MCF 10A (cell line): ENCODE measurements at regions of chr2 and their contacts with region 1.

Region 1: GRCh38 chr2:44479122-44479887 is 117.6 kb downstream of the CAMKMT start:
- DNase-seq: peak; percentile 86
- H3K4me3 Mint-ChIP-seq: no peak overlapping the region
- H3K27ac Mint-ChIP-seq: no peak overlapping the region
- H3K4me1 Mint-ChIP-seq: no peaks in the 10 kb centered on the region
- H3K27me3 Mint-ChIP-seq: no peaks in the 10 kb centered on the region
- CTCF ChIP-seq: peak; percentile 99

Region 2: GRCh38 chr2:44244129-44244871 is 235.0 kb before region 1 on chr2:
- CTCF ChIA-PET with region 1: interaction called, 3 read pairs
- POLR2A ChIA-PET with region 1: interaction called, 3 read pairs
- intact Hi-C with region 1: loop called (anchors 5 kb)
- DNase-seq: peak; percentile 74
- H3K4me3 Mint-ChIP-seq: peak overlapping the region; percentile 43
- H3K27ac Mint-ChIP-seq: no peak overlapping the region
- H3K4me1 Mint-ChIP-seq: peaks cover 14% of the 10 kb centered on the region
- H3K27me3 Mint-ChIP-seq: no peaks in the 10 kb centered on the region
- CTCF ChIP-seq: peak; percentile 43

Region 3: GRCh38 chr2:44291281-44292248 is 187.7 kb before region 1 on chr2:
- CTCF ChIA-PET with region 1: no interaction called
- POLR2A ChIA-PET with region 1: no interaction called
- intact Hi-C with region 1: no loop called
- DNase-seq: peak; percentile 56
- H3K4me3 Mint-ChIP-seq: no peak overlapping the region
- H3K27ac Mint-ChIP-seq: no peak overlapping the region
- H3K4me1 Mint-ChIP-seq: peaks cover 26% of the 10 kb centered on the region
- H3K27me3 Mint-ChIP-seq: no peaks in the 10 kb centered on the region
- CTCF ChIP-seq: peak; percentile 45

Region 4: GRCh38 chr2:44490726-44491125 is 11.4 kb after region 1 on chr2:
- CTCF ChIA-PET with region 1: interaction called, 14 read pairs
- POLR2A ChIA-PET with region 1: no interaction called
- intact Hi-C with region 1: no loop called
- DNase-seq: peak; percentile 8
- H3K4me3 Mint-ChIP-seq: no peak overlapping the region
- H3K27ac Mint-ChIP-seq: no peak overlapping the region
- H3K4me1 Mint-ChIP-seq: no peaks in the 10 kb centered on the region
- H3K27me3 Mint-ChIP-seq: no peaks in the 10 kb centered on the region
- CTCF ChIP-seq: no peak

Region 5: GRCh38 chr2:44560352-44560751 is 81.0 kb after region 1 on chr2:
- CTCF ChIA-PET with region 1: interaction called, 11 read pairs
- POLR2A ChIA-PET with region 1: interaction called, 3 read pairs
- intact Hi-C with region 1: no loop called
- DNase-seq: peak; percentile 45
- H3K4me3 Mint-ChIP-seq: no peak overlapping the region
- H3K27ac Mint-ChIP-seq: no peak overlapping the region
- H3K4me1 Mint-ChIP-seq: peaks cover 15% of the 10 kb centered on the region
- H3K27me3 Mint-ChIP-seq: no peaks in the 10 kb centered on the region
- CTCF ChIP-seq: peak; percentile 30

Region 6: DNA sequence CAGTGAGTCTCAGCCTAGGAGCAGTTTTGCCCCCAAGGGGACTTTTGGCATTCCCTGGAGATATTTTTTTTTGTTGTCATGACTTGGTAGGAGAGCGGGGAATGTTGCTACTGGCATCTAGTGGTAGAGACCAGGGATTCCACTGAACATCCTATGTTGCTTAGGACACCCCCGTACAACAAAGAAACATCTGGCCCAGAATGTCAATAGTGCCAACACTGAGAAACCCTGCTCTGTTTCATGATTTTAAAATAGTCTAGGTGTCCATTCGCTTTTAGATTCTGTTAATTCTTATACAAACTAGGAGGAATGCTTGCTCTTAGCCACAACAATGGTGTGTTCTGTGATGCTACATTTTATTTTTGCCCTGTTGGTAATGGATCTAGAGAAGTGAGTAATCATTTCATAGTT is 236.4 kb after region 1 on chr2:
- CTCF ChIA-PET with region 1: interaction called, 76 read pairs
- POLR2A ChIA-PET with region 1: no interaction called
- intact Hi-C with region 1: loop called (anchors 1 kb)
- DNase-seq: peak; percentile 52
- H3K4me3 Mint-ChIP-seq: no peak overlapping the region
- H3K27ac Mint-ChIP-seq: no peak overlapping the region
- H3K4me1 Mint-ChIP-seq: no peaks in the 10 kb centered on the region
- H3K27me3 Mint-ChIP-seq: no peaks in the 10 kb centered on the region
- CTCF ChIP-seq: peak; percentile 60

Region 7: DNA sequence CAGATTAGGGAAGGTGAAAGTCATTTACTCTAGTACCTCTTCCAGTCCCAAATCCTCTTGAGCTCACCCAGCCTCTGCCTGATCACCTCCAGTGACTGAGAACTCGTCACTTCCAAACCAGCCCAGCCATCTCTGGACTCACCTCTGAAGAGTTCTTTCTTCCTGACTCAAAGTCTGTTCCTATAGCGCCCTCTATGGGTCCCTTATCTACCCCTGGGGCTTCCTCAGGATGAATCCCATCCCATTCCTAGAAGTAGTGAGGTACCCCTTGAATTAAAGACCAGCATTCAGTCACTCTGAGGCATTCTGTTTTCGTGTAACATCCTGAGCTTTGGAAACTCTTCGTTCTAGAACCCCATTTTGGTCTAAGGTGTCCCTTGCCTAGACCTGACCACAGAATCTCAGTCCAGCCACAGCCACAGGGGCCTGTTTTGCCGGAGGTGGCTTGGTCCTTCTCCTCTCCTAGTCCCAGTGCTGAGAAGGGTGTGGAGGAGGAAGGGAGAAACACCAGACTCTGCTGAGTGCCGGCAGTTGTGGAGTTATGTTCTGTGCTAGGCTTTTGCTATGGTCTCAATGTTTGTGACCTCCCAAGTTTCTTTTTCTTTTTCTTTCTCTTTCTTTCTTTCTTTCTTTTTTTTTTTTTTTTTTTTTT is 494.9 kb after region 1 on chr2:
- CTCF ChIA-PET with region 1: interaction called, 5 read pairs
- POLR2A ChIA-PET with region 1: no interaction called
- intact Hi-C with region 1: loop called (anchors 1 kb)
- DNase-seq: peak; percentile 77
- H3K4me3 Mint-ChIP-seq: no peak overlapping the region
- H3K27ac Mint-ChIP-seq: no peak overlapping the region
- H3K4me1 Mint-ChIP-seq: peaks cover 5% of the 10 kb centered on the region
- H3K27me3 Mint-ChIP-seq: no peaks in the 10 kb centered on the region
- CTCF ChIP-seq: peak; percentile 63